Lower leg skin (tissue), 4 donors: ENCODE measurements at regions of chr17 and their contacts with region 1.

Region 1: GRCh38 chr17:2521257-2521656 is 9.6 kb upstream of the METTL16 start:
- DNase-seq: peak in 1 of 2 donors; percentile 28
- H3K4me3 ChIP-seq: no peak overlapping the region
- CTCF ChIP-seq: no peak
- POLR2A ChIP-seq: no peak

Region 2: GRCh38 chr17:2094891-2095535 is 426.2 kb before region 1 on chr17:
- intact Hi-C with region 1: loop called (anchors 5 kb)
- DNase-seq: peak; percentile 56 to 93
- H3K4me3 ChIP-seq: no peak overlapping the region
- CTCF ChIP-seq: peak in 1 of 3 donors; percentile 61
- POLR2A ChIP-seq: no peak

Region 3: DNA sequence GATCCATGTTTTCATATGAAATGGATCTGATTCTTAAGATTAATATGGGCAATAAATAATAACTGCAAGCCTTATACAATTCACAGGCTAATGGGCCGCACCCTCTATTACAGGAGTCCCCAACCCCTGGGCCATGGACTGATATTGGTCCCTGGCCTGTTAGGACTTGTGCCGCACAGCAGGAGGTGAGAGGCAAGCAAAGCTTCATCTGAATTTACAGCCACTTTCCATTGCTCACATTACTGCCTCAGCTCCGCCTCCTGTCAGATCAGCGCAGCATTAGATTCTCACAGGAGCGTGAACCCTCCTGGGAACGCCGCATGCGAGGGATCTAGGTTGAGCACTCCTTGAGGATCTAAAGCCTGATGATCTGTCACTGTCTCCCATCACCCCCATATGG is 36.4 kb before region 1 on chr17:
- intact Hi-C with region 1: no loop called
- DNase-seq: peak in 1 of 2 donors; percentile 34
- H3K4me3 ChIP-seq: no peak overlapping the region
- CTCF ChIP-seq: no peak
- POLR2A ChIP-seq: no peak